Activated T-helper 2 cell treated with anti-CD3 and anti-CD28 coated beads, Interferon-gamma antibody, Interleukin-2, Interleukin-4, amounts not matched to agents 10 μg/mL and 5 μg/mL and 100 μg/mL, durations not matched to agents 14 hours and 24 hours and 36 hours (primary cell): ENCODE measurements at regions of chr3 and their contacts with region 1.

Region 1: DNA sequence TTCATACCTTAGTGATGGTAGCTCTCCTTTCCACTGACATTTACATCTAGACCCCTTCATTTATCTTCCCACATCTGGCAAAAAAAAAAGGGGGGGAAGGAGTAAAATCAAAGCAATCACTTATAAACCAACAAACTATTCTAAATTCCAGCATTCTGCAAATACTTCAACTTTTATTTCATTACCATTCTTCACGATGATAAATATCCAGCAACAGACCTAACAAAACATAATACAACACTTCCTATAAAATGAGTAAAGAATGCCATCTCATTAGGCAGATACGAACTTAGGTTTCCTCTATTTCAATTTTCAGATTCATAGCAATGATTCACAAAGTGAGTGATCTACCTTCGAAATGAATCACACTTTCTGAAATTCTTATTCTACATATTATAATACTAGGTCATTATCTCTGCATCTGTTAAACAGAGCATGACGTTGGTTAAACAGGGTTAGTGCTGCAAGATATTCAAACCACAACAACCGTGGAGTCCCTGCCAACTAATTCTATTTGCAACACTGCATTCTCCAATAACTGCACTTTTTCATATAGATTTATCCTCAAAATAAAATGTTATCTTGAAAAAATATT is at the start of gene LRRFIP2:
- DNase-seq: no peak
- H3K4me3 Mint-ChIP-seq: peak within 1 kb of the TSS; percentile 90
- H3K27ac Mint-ChIP-seq: peak within 1 kb of the TSS; percentile 79
- H3K4me1 Mint-ChIP-seq: peaks cover 53% of the 10 kb centered on the region
- H3K27me3 Mint-ChIP-seq: no peaks in the 10 kb centered on the region
- total RNA-seq, gene LRRFIP2: 36.8 and 38.3 TPM in 2 replicates

Region 2: GRCh38 chr3:37139567-37140052 is 35.0 kb before region 1 on chr3:
- intact Hi-C with region 1: loop called (anchors 1 kb)
- DNase-seq: no peak
- H3K4me3 Mint-ChIP-seq: no peak overlapping the region
- H3K27ac Mint-ChIP-seq: no peak overlapping the region
- H3K4me1 Mint-ChIP-seq: peaks cover 5% of the 10 kb centered on the region
- H3K27me3 Mint-ChIP-seq: no peaks in the 10 kb centered on the region

Region 3: DNA sequence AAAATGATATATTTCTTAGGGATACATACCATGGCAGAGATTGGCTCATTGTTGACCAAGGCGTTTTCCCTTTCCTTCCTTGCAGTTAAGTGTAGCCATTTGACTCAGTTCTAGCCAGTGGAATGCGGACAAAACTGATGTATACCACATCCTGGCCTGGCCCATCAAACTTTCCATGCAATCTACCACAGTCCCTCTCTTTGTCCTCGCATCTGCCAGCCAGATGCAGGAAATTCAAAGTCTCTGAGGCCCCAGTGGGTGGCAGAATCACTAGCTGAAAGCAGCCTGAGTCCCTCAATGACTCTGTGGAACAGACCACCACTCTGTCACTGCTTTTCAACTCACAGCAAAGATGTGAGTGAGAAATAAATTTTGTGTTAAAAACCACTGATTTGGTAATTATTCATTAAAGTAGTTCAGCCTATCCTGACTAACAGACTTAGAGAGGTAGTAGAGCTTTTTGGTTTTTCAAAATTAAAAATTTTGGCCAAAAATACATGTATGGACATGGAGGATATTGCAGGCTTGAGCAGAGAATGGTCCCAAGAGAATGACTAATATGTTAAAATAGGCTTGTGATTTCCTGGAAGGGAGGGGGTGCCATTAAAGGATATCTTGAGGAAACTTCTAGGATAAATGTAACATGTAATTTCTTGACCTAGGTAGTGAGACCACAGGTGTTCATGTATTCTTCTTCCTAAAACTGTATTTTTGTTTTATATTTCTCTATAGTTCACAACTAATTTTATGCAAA is 11.2 kb before region 1 on chr3:
- intact Hi-C with region 1: loop called (anchors 1 kb)
- DNase-seq: no peak
- H3K4me3 Mint-ChIP-seq: peak overlapping the region; percentile 20
- H3K27ac Mint-ChIP-seq: peak overlapping the region; percentile 72
- H3K4me1 Mint-ChIP-seq: peaks cover 30% of the 10 kb centered on the region
- H3K27me3 Mint-ChIP-seq: no peaks in the 10 kb centered on the region